GM13977 (cell line): ENCODE measurements at regions of chr1 and their contacts with region 1.

Region 1: DNA sequence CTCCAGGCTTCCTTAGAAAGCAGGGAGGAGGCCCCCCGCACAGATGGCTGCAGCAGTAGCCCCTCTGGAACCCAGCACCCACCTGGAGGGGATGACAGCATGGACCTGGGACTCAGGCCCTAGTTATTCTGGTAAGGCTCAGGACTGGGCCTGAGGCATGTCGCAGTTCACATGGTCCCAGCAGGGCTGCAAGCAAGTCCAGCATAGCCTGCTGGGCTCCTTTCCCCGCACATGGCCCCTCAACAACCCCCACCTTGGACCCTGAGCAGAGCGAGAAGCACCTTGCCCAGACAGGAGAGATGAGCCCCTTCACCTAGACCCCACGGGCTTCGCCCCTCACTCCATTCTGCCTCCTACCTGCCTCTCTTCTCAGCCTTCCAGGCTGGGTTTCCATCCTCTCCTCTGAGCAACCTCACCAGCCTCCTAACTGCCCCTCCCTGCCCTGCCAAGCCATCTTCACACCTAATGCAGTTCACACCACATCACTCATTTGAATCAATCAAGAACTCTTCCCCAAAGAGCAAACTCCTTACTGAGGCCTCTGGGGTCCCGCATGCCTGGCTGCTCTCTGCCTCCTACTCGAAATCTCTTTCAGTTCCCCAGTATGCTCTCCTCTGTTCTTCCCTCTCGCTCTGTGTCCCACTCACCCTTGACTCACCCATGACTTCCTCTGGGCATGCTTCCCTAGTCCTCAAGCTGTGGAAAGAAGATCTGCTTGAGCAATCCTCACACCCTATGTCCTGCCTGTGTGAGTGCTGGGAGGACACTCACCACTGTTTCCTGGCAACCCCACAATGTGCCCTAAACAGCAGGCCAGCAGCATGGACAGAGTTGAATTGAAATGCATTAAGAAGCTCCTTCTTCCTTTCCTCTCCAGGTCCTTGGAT is 9.4 kb upstream of the THEMIS2 start:
- DNase-seq: no peak
- CTCF ChIP-seq: no peak

Region 2: GRCh38 chr1:27959400-27960217 is 96.7 kb after region 1 on chr1 and contains the start of gene XKR8:
- in situ Hi-C with region 1: loop called (anchors 10 kb)
- DNase-seq: peak; percentile 97
- CTCF ChIP-seq: peak; percentile 59